ENCODE measurements at regions of chr1 and their contacts with region 1.

Region 1: DNA sequence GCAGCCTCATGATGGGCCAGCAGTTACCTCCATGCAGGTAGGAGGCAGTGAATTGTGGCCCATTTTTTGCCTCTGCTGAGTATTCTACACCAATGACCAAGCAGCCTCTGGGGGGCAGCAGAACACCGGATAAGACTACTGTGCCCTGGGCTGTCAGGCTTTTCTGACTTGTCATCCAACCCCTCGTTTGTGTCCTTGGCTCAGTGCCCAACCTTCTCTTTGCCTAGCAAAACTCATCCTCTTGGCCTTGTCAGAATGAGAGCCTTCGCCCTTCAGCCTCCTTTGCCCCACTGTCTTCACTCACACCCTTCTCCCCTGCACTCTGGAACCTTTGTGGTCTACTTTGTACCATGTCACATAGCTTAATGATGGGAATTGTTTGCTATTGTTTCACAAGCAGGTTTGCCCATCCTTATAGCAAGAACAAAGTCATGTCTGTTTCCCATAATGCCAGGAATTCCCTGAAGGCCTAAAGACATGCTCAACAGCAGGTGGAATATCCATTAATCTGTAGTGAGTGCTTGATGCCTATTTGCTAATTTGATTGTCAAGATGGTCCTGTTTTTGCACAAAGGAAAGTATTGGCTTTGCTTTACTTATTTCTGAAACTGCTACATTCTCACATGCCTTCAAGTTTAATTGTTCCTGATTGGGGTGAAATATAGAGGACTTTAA is 255.9 kb downstream of the HHAT start:
- DNase-seq: peak; percentile 78 to 87 (median 80)
- ATAC-seq: peak; percentile 97 to 99 (median 98)
- H3K4me3 ChIP-seq: no peak overlapping the region
- H3K27ac ChIP-seq: no peak overlapping the region
- H3K4me1 ChIP-seq: no peaks in the 10 kb centered on the region
- H3K27me3 ChIP-seq: no peaks in the 10 kb centered on the region
- CTCF ChIP-seq: peak; percentile 62 to 78 (median 74)
- POLR2A ChIP-seq: no peak

Region 2: GRCh38 chr1:210536254-210536961 is 48.2 kb before region 1 on chr1:
- intact Hi-C with region 1: no loop called
- DNase-seq: no peak
- ATAC-seq: no peak
- H3K4me3 ChIP-seq: no peak overlapping the region
- H3K27ac ChIP-seq: no peak overlapping the region
- H3K4me1 ChIP-seq: no peaks in the 10 kb centered on the region
- H3K27me3 ChIP-seq: no peaks in the 10 kb centered on the region
- CTCF ChIP-seq: no peak
- POLR2A ChIP-seq: no peak

Region 3: GRCh38 chr1:210944252-210944651 is 359.7 kb after region 1 on chr1:
- intact Hi-C with region 1: loop called in 1 of 2 experiments (anchors 10 kb)
- DNase-seq: no peak
- ATAC-seq: no peak
- H3K4me3 ChIP-seq: no peak overlapping the region
- H3K27ac ChIP-seq: no peak overlapping the region
- H3K4me1 ChIP-seq: peaks cover 0 to 10% (median 0%) of the 10 kb centered on the region in 4 donors
- H3K27me3 ChIP-seq: no peaks in the 10 kb centered on the region
- CTCF ChIP-seq: no peak
- POLR2A ChIP-seq: no peak

Region 4: GRCh38 chr1:211133836-211134669 is 549.5 kb after region 1 on chr1 and contains the start of gene KCNH1:
- intact Hi-C with region 1: loop called (anchors 5 to 10 kb)
- DNase-seq: peak; percentile 65 to 71 (median 70)
- ATAC-seq: peak; percentile 88 to 97 (median 96)
- H3K4me3 ChIP-seq: peak within 1 kb of the TSS; percentile 25 to 45 (median 32)
- H3K27ac ChIP-seq: no peak within 1 kb of the TSS
- H3K4me1 ChIP-seq: peaks cover 0 to 12% (median 3%) of the 10 kb centered on the region in 4 donors
- H3K27me3 ChIP-seq: peaks cover 0 to 20% of the 10 kb centered on the region in 2 donors
- CTCF ChIP-seq: peak; percentile 79 to 89 (median 84)
- POLR2A ChIP-seq: no peak
- total RNA-seq, gene KCNH1: not detected